ENCODE measurements at regions of chr16 and their contacts with region 1.

Region 1: DNA sequence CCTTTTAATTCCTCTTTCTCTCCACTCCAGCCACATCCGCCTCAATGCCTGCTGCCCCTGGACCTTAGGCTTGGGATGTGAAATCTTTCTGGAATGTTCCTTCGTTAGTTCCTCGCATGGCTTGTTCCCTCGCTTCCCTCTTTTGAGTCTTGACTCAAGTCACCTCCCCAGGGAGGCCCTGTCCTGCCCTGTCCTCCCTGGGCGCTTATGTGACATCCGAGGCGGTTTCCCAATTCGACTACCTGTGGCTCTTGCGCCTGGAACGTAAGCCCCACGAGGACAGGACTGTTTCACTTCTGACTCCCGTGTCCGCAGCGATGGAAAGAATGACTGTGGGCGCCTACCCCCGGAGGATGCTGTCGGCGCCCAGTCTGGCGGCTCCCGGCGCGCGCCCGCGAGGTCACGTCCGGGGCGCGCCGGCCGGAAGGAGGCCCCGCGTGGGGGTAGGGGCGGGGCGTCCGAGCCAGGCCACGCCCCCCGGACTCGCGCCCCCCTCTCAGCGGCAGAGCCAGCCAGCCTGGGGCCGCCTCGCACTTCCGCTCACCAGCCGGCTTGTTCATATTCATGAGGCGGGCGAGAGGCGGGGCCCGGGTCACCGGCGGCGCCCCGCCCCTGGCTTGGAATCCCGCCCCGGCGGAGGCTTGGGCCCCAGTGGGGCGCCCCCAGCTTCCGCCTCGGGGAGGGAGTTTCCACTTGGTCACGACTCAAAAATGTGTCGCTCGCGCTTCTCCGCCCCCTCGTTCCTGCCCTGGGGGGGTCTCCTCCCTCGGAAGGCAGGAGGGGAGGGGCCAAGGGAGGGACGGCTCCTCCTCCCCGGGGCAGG is 8.4 kb upstream of the GLIS2 start:
- DNase-seq: peak; percentile 98
- ATAC-seq: peak; percentile 92
- H3K4me3 Mint-ChIP-seq: peak overlapping the region; percentile 96
- H3K27ac Mint-ChIP-seq: peak overlapping the region; percentile 99
- H3K4me1 Mint-ChIP-seq: peaks cover 30% of the 10 kb centered on the region
- H3K27me3 Mint-ChIP-seq: no peaks in the 10 kb centered on the region

Region 2: DNA sequence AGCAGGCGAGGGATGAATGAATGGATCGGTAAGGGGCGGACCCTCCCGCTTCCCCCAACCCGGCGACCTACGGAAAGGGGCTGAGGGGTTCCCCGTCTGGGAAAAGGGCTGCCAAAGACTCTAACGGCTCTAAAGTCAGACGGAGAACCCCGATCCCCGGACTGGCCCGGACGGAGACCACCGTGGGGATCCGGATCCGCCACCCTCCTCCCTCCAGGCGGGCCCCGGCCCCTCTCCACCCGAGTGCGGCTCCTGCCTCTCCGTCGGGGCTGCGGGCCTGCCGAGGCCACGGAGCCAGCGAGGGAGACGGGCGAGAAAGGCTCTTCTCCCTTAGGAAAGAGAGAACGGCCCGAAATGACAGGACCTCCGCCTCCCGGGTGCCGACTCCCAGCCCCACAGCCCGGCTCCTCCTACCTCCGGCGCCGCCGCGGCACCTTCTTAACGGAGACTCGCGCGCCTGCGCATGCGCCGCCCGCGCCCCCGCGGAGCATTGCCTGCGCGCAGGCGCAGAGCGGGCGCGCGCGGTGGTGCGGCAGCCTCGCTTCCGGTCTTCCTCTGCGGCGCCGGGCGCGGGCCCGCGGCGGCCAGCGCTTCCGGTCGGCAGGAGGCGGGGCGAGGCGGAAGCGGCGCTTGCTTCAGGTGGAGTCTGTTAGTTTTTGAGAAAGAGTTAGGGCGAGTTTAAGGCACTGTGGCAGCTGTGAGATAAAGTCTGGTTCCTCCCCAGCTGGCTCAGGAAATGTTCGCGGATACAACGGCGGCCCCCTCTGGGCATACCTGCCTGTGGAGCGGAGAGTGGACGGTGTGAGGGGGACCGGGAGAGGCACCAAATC is 696.1 kb before region 1 on chr16 and contains the start of gene SLX4:
- CTCF ChIA-PET with region 1: no interaction called
- POLR2A ChIA-PET with region 1: no interaction called
- intact Hi-C with region 1: loop called in 1 of 2 experiments (anchors 1 kb)
- DNase-seq: peak; percentile 95
- ATAC-seq: peak; percentile 90
- H3K4me3 Mint-ChIP-seq: peak within 1 kb of the TSS; percentile 100
- H3K27ac Mint-ChIP-seq: peak within 1 kb of the TSS; percentile 98
- H3K4me1 Mint-ChIP-seq: peaks cover 41% of the 10 kb centered on the region
- H3K27me3 Mint-ChIP-seq: no peaks in the 10 kb centered on the region
- total RNA-seq, gene SLX4: 10.7 to 11.7 TPM

Region 3: DNA sequence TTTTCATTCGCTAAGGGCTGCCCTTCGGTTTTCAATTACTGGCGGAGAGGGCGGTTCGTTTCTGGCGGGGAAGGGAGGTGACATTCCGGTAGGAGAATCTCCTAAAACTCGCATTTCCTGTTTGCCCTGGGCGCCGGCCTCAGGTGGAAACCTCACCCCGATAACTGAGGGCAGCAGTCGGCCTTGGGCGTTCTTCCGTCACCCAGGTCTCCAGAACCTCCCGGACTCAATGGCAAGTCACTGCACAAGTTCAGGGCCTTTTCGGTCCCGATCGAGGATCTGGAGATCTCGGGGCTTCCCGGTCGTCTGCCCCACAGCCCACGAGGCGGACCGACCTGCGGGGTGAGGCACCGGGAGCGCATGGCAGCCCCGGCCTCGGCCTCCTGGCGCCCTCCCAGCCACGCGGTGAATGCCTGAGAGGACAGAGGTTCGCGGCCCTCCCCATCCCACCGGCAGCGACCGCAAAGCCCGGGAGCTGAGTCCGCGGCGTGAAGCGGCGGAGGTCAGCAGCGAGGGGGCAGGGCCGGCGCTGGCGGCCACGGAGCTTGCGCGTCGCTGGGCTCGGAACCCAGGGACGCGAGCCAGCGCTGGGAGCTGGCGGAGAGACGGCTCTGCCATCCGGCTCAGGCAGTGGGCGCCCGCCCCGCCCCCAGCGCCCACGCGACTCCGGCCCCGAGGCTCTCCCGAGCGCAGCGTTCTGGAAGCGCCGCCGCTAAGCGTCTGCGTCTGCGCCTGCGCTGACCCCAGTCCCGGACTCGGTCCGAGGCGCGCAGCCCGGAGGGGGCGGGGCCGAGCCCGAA is 124.0 kb before region 1 on chr16:
- CTCF ChIA-PET with region 1: no interaction called
- POLR2A ChIA-PET with region 1: no interaction called
- intact Hi-C with region 1: loop called in 1 of 2 experiments (anchors 2 kb)
- DNase-seq: peak; percentile 94
- ATAC-seq: peak; percentile 95
- H3K4me3 Mint-ChIP-seq: peak overlapping the region; percentile 76
- H3K27ac Mint-ChIP-seq: peak overlapping the region; percentile 47
- H3K4me1 Mint-ChIP-seq: peaks cover 6% of the 10 kb centered on the region
- H3K27me3 Mint-ChIP-seq: no peaks in the 10 kb centered on the region

Region 4: GRCh38 chr16:4330277-4330874 is 22.9 kb after region 1 on chr16:
- CTCF ChIA-PET with region 1: interaction called, 14 read pairs
- POLR2A ChIA-PET with region 1: no interaction called
- intact Hi-C with region 1: loop called in 1 of 2 experiments (anchors 1 kb)
- DNase-seq: peak; percentile 86
- ATAC-seq: peak; percentile 80
- H3K4me3 Mint-ChIP-seq: no peak overlapping the region
- H3K27ac Mint-ChIP-seq: no peak overlapping the region
- H3K4me1 Mint-ChIP-seq: no peaks in the 10 kb centered on the region
- H3K27me3 Mint-ChIP-seq: no peaks in the 10 kb centered on the region

Region 5: GRCh38 chr16:4416200-4417032 is 109.0 kb after region 1 on chr16 and contains the start of gene CORO7:
- CTCF ChIA-PET with region 1: no interaction called
- POLR2A ChIA-PET with region 1: interaction called, 3 read pairs
- intact Hi-C with region 1: loop called in 1 of 2 experiments (anchors 1 kb)
- DNase-seq: peak; percentile 98
- ATAC-seq: peak; percentile 81
- H3K4me3 Mint-ChIP-seq: peak within 1 kb of the TSS; percentile 86
- H3K27ac Mint-ChIP-seq: peak within 1 kb of the TSS; percentile 84
- H3K4me1 Mint-ChIP-seq: peaks cover 29% of the 10 kb centered on the region
- H3K27me3 Mint-ChIP-seq: no peaks in the 10 kb centered on the region
- total RNA-seq, gene CORO7: 65.0 to 67.1 TPM

Region 6: GRCh38 chr16:4616047-4616811 is 308.8 kb after region 1 on chr16:
- CTCF ChIA-PET with region 1: interaction called, 3 read pairs
- POLR2A ChIA-PET with region 1: no interaction called
- intact Hi-C with region 1: loop called in 1 of 2 experiments (anchors 1 kb)
- DNase-seq: peak; percentile 100
- ATAC-seq: peak; percentile 89
- H3K4me3 Mint-ChIP-seq: peak overlapping the region; percentile 86
- H3K27ac Mint-ChIP-seq: peak overlapping the region; percentile 95
- H3K4me1 Mint-ChIP-seq: peaks cover 17% of the 10 kb centered on the region
- H3K27me3 Mint-ChIP-seq: no peaks in the 10 kb centered on the region

Measured in activated CD4-positive, alpha-beta T cell treated with anti-CD3 and anti-CD28 coated beads for 36 hours (primary cell).